Caco-2 (cell line): ENCODE measurements at regions of chr22 and their contacts with region 1.

Region 1: DNA sequence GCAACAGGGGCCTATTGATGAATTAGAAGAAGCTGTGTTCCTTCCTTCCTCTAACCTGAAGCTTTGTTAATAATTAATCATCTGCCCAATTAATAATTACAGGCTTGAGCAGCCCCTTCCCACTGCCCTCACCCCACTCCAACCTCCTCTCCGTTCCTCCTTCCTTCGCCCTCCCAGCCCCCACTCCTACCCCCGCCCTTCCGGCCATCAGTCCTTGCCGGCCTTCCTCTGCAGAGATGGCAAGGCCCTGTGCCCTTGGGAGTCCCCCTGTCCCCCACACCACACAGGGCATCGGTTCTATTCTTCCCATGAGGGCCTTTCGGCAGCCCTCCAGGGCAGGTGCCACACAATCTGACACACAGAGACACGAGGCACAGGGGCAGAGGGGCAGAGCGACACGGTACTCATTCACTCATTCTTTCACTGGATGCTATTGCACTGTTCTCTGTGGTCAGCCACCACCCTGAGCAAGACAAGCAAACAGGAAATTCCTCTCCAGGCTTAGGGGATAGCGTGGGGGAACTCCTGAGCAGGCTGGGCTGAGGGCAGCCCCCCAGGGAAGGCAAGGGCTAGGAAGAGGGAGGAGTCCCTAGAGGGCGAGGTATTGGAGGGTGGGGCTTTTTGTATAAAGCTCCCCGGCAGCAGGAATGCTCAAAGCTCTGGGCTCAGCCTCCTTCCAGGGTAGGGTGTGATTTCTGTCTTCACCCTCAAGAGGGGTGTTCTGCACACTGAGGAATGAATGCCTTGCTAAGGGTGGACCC is 14.7 kb downstream of the MGAT3 start:
- DNase-seq: peak; percentile 56 to 80
- H3K4me3 ChIP-seq: peak overlapping the region; percentile 36; the same call in 1 of the 2 replicates
- H3K4me3 Mint-ChIP-seq: peak overlapping the region; percentile 67
- H3K27ac Mint-ChIP-seq: peak overlapping the region; percentile 98
- H3K4me1 ChIP-seq: peaks cover 79% of the 10 kb centered on the region
- H3K4me1 Mint-ChIP-seq: peaks cover 67% of the 10 kb centered on the region
- H3K27me3 ChIP-seq: no peaks in the 10 kb centered on the region
- H3K27me3 Mint-ChIP-seq: no peaks in the 10 kb centered on the region
- CTCF ChIP-seq: no peak

Region 2: DNA sequence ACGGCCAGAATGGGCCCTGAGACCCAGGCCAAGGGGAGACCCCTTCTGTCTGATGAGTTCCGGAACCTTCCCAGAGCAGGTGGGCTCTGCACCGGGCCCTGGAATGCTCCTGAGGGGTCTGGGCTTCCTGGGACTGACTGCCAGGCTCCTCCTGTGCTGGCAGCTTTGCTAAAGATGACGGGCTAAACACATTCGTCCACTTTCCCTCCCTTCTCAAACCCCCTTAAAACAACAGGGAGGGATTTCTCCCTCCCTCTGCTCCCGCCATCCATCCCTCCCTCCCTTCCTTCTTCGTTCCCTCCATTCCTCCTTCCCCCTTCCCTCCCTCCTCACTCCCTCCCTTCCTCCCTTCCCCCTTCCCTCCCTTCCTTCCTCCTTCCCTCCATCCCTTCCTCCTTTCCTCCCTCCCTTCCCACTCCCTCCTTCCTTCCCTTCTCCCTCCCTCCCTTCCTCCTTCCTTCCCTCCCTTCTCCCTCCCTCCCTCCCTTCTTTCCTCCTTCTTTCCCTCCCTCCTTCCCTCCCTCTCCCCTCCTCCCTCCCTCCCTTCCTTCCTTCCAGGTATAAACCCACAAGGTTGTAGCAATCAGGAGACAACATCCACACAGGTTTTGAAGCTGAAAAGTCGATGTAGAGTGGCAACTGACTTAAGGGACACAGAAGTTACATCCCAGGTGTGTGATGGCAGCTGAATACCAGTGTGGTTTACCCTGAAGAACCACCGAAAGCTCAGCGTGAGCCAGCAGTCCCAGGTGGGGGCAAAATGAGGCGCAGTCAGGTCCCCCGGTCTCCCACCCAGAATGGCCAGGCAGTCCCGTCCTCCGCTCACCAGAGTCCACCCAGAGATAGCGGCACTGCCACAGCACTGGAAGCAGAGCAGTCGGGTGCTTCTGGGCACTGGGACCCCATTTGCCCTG is 33.5 kb before region 1 on chr22:
- CTCF ChIA-PET with region 1: interaction called, 7 read pairs
- POLR2A ChIA-PET with region 1: interaction called, 4 read pairs
- intact Hi-C with region 1: loop called (anchors 2 kb)
- DNase-seq: no peak
- H3K4me3 ChIP-seq: no peak overlapping the region
- H3K4me3 Mint-ChIP-seq: no peak overlapping the region
- H3K27ac Mint-ChIP-seq: no peak overlapping the region
- H3K4me1 ChIP-seq: peaks cover 15% of the 10 kb centered on the region
- H3K4me1 Mint-ChIP-seq: no peaks in the 10 kb centered on the region
- H3K27me3 ChIP-seq: no peaks in the 10 kb centered on the region
- H3K27me3 Mint-ChIP-seq: no peaks in the 10 kb centered on the region
- CTCF ChIP-seq: no peak

Region 3: GRCh38 chr22:39448205-39449054 is 23.1 kb before region 1 on chr22:
- CTCF ChIA-PET with region 1: interaction called, 5 read pairs
- POLR2A ChIA-PET with region 1: interaction called, 5 read pairs
- intact Hi-C with region 1: loop called (anchors 2 kb)
- DNase-seq: peak; percentile 80 to 90
- H3K4me3 ChIP-seq: no peak overlapping the region
- H3K4me3 Mint-ChIP-seq: peak overlapping the region; percentile 29
- H3K27ac Mint-ChIP-seq: peak overlapping the region; percentile 76
- H3K4me1 ChIP-seq: peaks cover 42% of the 10 kb centered on the region
- H3K4me1 Mint-ChIP-seq: peaks cover 40% of the 10 kb centered on the region
- H3K27me3 ChIP-seq: no peaks in the 10 kb centered on the region
- H3K27me3 Mint-ChIP-seq: no peaks in the 10 kb centered on the region
- CTCF ChIP-seq: no peak

Region 4: DNA sequence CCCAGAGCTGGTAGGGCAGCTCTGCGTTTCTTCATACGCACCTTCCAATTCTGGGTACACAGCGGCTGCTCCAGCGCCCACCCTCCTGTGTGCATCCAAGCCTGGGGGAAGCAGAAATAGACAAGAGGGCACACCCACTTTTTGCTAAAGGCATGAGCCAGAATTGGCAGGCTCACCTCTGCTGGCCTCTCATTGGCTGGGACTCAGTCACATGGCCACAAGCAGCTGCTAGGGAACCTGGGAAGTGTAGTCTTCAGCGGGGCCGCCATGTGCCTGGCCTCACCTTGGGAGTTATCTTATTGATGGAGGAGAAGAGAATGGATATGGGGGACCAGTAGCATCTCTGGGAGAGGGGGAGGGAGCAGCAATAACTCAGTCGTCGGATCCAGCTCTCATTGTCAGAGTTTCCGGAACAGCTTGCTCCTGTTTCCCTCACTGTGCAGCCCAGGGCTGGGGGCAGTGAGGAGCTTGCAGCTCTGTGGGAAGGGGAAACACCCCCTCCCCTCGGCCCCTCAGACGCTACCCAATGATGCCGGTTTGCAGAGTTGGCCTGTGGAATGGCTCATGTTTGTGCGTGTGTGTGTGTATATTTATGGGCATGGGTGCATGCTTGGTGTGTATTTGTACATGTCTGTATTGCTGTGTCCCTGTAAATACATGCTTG is 18.7 kb after region 1 on chr22:
- CTCF ChIA-PET with region 1: interaction called, 4 read pairs
- POLR2A ChIA-PET with region 1: interaction called, 7 read pairs
- intact Hi-C with region 1: loop called (anchors 2 kb)
- DNase-seq: peak; percentile 75 to 84
- H3K4me3 ChIP-seq: no peak overlapping the region
- H3K4me3 Mint-ChIP-seq: no peak overlapping the region
- H3K27ac Mint-ChIP-seq: no peak overlapping the region
- H3K4me1 ChIP-seq: peaks cover 16% of the 10 kb centered on the region
- H3K4me1 Mint-ChIP-seq: peaks cover 17% of the 10 kb centered on the region
- H3K27me3 ChIP-seq: no peaks in the 10 kb centered on the region
- H3K27me3 Mint-ChIP-seq: no peaks in the 10 kb centered on the region
- CTCF ChIP-seq: no peak

Region 5: GRCh38 chr22:39502109-39502788 is 30.7 kb after region 1 on chr22 and contains the start of gene MIEF1:
- CTCF ChIA-PET with region 1: interaction called, 13 read pairs
- POLR2A ChIA-PET with region 1: interaction called, 3 read pairs
- intact Hi-C with region 1: no loop called
- DNase-seq: peak; percentile 96 to 97
- H3K4me3 ChIP-seq: peak within 1 kb of the TSS; percentile 94
- H3K4me3 Mint-ChIP-seq: peak within 1 kb of the TSS; percentile 78
- H3K27ac Mint-ChIP-seq: peak within 1 kb of the TSS; percentile 62
- H3K4me1 ChIP-seq: peaks cover 6% of the 10 kb centered on the region
- H3K4me1 Mint-ChIP-seq: peaks cover 29% of the 10 kb centered on the region
- H3K27me3 ChIP-seq: no peaks in the 10 kb centered on the region
- H3K27me3 Mint-ChIP-seq: no peaks in the 10 kb centered on the region
- CTCF ChIP-seq: no peak
- total RNA-seq, gene MIEF1: 47.4 and 49.4 TPM in 2 replicates

Region 6: GRCh38 chr22:39997939-39998338 is 526.4 kb after region 1 on chr22:
- CTCF ChIA-PET with region 1: no interaction called
- POLR2A ChIA-PET with region 1: no interaction called
- intact Hi-C with region 1: loop called (anchors 5 kb)
- DNase-seq: peak; percentile 60 to 62
- H3K4me3 ChIP-seq: no peak overlapping the region
- H3K4me3 Mint-ChIP-seq: peak overlapping the region; percentile 64
- H3K27ac Mint-ChIP-seq: peak overlapping the region; percentile 93
- H3K4me1 ChIP-seq: peaks cover 75% of the 10 kb centered on the region
- H3K4me1 Mint-ChIP-seq: peaks cover 41% of the 10 kb centered on the region
- H3K27me3 ChIP-seq: no peaks in the 10 kb centered on the region
- H3K27me3 Mint-ChIP-seq: no peaks in the 10 kb centered on the region
- CTCF ChIP-seq: no peak